Activated CD8-positive, alpha-beta T cell treated with anti-CD3 and anti-CD28 coated beads, Interleukin-2, amount 10 ng/mL, durations not matched to agents 7 days and 5 days (primary cell): ENCODE measurements at regions of chr3 and their contacts with region 1.

Region 1: GRCh38 chr3:43759297-43759782 is 68.6 kb downstream of the ABHD5 start:
- DNase-seq: peak; percentile 25
- ATAC-seq: no peak
- H3K4me3 Mint-ChIP-seq: no peak overlapping the region
- H3K27ac Mint-ChIP-seq: no peak overlapping the region
- H3K4me1 Mint-ChIP-seq: peaks cover 20% of the 10 kb centered on the region
- H3K27me3 Mint-ChIP-seq: no peaks in the 10 kb centered on the region

Region 2: DNA sequence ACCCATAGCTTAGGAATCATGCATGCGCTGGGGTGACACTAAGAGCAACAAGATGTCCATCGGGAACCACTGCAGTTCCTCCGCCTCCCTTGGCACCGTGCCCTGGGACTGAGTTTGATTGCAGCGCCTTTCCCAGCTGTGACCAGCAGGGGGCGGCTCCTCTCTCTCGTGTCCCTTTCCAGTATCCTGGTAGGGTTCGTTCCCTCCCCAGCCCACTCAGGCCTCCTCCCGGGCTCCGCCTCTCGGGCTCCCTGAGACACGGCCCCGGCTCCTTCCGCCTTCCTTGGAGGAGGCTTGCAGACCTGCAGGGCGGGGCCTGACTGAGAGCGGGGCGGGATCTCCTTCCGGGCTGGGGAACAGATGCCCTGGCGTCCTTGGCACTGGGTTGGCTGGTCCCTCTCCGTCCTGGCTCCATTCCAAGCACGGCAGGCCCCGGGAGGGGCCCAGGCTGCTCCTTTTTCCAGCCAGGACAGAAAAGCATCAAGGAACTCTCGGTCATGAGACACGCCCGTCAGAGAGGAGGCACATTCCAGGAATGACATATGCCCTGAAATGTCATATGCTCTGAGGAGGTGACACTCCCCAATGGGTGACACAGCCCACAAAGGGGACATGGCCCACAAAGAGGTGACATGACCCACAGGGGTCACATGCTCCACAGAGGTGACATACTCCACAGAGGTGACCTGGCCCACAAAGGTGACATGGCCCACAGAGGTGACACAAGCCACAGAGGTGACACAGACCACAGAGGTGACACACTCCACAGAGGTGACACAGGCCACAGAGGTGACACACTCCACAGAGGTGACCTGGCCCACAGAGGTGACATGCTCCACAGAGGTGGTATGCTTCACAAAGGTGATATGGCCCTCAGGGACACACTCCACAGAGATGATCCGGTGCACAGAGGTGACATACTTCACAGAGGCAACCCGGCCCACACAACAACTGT is 10.4 kb after region 1 on chr3:
- CTCF ChIA-PET with region 1: interaction called, 21 read pairs
- POLR2A ChIA-PET with region 1: no interaction called
- DNase-seq: peak; percentile 77
- ATAC-seq: peak; percentile 75
- H3K4me3 Mint-ChIP-seq: no peak overlapping the region
- H3K27ac Mint-ChIP-seq: no peak overlapping the region
- H3K4me1 Mint-ChIP-seq: peaks cover 24% of the 10 kb centered on the region
- H3K27me3 Mint-ChIP-seq: peaks cover 11% of the 10 kb centered on the region

Region 3: GRCh38 chr3:44098656-44099415 is 339.5 kb after region 1 on chr3:
- CTCF ChIA-PET with region 1: no interaction called
- POLR2A ChIA-PET with region 1: no interaction called
- DNase-seq: no peak
- ATAC-seq: no peak
- H3K4me3 Mint-ChIP-seq: no peak overlapping the region
- H3K27ac Mint-ChIP-seq: no peak overlapping the region
- H3K4me1 Mint-ChIP-seq: peaks cover under 1% of the 10 kb centered on the region
- H3K27me3 Mint-ChIP-seq: peaks cover 37% of the 10 kb centered on the region